Thyroid gland (tissue), 4 donors: ENCODE measurements at regions of chr4 and their contacts with region 1.

Region 1: GRCh38 chr4:54440394-54441136 is 211.5 kb downstream of the PDGFRA start:
- DNase-seq: no peak
- H3K4me3 ChIP-seq: no peak overlapping the region
- H3K27ac ChIP-seq: no peak overlapping the region
- H3K4me1 ChIP-seq: no peaks in the 10 kb centered on the region
- H3K27me3 ChIP-seq: no peaks in the 10 kb centered on the region
- CTCF ChIP-seq: peak in 2 of 6 experiments; percentile 31 to 51
- POLR2A ChIP-seq: no peak

Region 2: GRCh38 chr4:54333657-54334056 is 106.9 kb before region 1 on chr4:
- intact Hi-C with region 1: loop called (anchors 10 kb)
- DNase-seq: no peak
- H3K4me3 ChIP-seq: no peak overlapping the region
- H3K27ac ChIP-seq: no peak overlapping the region
- H3K4me1 ChIP-seq: no peaks in the 10 kb centered on the region
- H3K27me3 ChIP-seq: no peaks in the 10 kb centered on the region
- CTCF ChIP-seq: no peak
- POLR2A ChIP-seq: no peak